Activated CD8-positive, alpha-beta T cell treated with anti-CD3 and anti-CD28 coated beads for 36 hours (primary cell): ENCODE measurements at regions of chr5 and their contacts with region 1.

Region 1: DNA sequence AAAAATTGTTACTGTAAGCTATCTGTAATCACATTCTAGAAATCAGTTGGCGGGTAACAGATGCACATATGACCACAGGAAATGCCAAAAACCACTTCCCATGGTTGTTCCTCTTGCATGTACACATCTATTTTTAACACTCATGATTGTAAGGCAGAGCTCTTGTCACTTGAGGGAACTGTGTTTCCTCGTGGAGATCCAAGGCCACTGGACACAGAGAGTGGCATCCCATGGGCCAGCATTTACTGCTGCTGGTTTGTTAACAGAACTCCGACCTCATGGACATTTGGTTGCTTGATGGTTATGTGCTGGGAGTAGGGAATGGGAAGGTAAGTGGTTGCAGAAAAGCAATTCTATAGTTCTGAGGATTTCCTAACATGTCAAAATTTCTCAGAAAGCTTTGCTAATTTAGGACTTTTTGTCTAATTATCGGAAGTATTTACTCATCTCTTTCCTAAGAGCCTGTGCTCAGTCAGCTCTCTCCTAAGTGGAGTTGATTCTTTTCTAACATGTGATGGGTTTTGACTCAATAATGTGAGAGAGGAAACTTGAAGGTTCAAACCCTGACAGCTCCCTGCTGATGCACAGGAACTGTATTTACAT is 202.0 kb upstream of the NR3C1 start:
- DNase-seq: peak; percentile 68
- ATAC-seq: peak; percentile 59
- H3K4me3 Mint-ChIP-seq: no peak overlapping the region
- H3K27ac Mint-ChIP-seq: peak overlapping the region; percentile 90
- H3K4me1 Mint-ChIP-seq: peaks cover 33% of the 10 kb centered on the region
- H3K27me3 Mint-ChIP-seq: peaks cover 8% of the 10 kb centered on the region
- CTCF ChIP-seq: no peak

Region 2: GRCh38 chr5:143693651-143694252 is 88.2 kb after region 1 on chr5:
- CTCF ChIA-PET with region 1: no interaction called
- POLR2A ChIA-PET with region 1: no interaction called
- intact Hi-C with region 1: loop called (anchors 10 kb)
- DNase-seq: peak; percentile 12
- ATAC-seq: peak; percentile 74
- H3K4me3 Mint-ChIP-seq: no peak overlapping the region
- H3K27ac Mint-ChIP-seq: peak overlapping the region; percentile 40
- H3K4me1 Mint-ChIP-seq: peaks cover 42% of the 10 kb centered on the region
- H3K27me3 Mint-ChIP-seq: peaks cover 4% of the 10 kb centered on the region
- CTCF ChIP-seq: no peak

Region 3: GRCh38 chr5:143850050-143850683 is 244.7 kb after region 1 on chr5:
- CTCF ChIA-PET with region 1: no interaction called
- POLR2A ChIA-PET with region 1: no interaction called
- intact Hi-C with region 1: no loop called
- DNase-seq: no peak
- ATAC-seq: no peak
- H3K4me3 Mint-ChIP-seq: no peak overlapping the region
- H3K27ac Mint-ChIP-seq: no peak overlapping the region
- H3K4me1 Mint-ChIP-seq: peaks cover 5% of the 10 kb centered on the region
- H3K27me3 Mint-ChIP-seq: no peaks in the 10 kb centered on the region
- CTCF ChIP-seq: no peak